BJ (cell line): ENCODE measurements at regions of chr17 and their contacts with region 1.

Region 1: GRCh38 chr17:55527540-55528118 is 16.4 kb upstream of the SMIM36 start:
- DNase-seq: no peak
- H3K4me3 ChIP-seq: no peak overlapping the region
- H3K27me3 ChIP-seq: peaks cover 1% of the 10 kb centered on the region; the same call in 1 of the 2 replicates
- CTCF ChIP-seq: peak; percentile 74

Region 2: DNA sequence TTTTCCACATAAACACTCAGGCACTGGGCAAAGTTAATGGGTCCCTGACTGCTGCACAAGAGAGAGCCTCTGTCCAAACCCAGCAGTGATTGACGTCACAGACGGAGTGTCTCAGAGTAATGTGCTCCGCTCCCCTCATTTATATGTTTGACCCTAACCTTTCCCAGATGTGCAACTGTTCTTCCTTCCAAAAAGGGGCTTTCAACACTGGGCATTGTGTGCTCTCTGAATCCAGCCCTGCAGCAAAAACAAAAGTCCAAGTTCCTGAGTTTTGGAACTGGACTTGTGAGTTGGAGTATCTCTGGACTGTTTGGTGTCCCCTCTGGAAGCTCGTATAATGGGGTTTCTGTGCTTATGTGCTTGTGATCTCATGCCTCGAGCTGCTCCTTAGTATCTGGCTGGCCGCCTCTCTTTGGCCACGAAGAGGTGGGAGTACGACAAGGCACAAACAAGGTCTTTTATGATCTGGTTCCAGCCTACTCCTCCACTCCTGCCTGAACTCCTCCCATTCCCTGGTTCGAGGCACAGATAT is 60.0 kb after region 1 on chr17:
- CTCF ChIA-PET with region 1: interaction called, 21 read pairs
- POLR2A ChIA-PET with region 1: no interaction called
- DNase-seq: no peak
- H3K4me3 ChIP-seq: no peak overlapping the region
- H3K27me3 ChIP-seq: no peaks in the 10 kb centered on the region
- CTCF ChIP-seq: no peak

Region 3: GRCh38 chr17:55641676-55642081 is 114.0 kb after region 1 on chr17:
- CTCF ChIA-PET with region 1: interaction called, 59 read pairs
- POLR2A ChIA-PET with region 1: no interaction called
- DNase-seq: no peak
- H3K4me3 ChIP-seq: no peak overlapping the region
- H3K27me3 ChIP-seq: no peaks in the 10 kb centered on the region
- CTCF ChIP-seq: peak; percentile 81

Region 4: GRCh38 chr17:55717898-55718735 is 190.5 kb after region 1 on chr17:
- CTCF ChIA-PET with region 1: interaction called, 60 read pairs
- POLR2A ChIA-PET with region 1: no interaction called
- DNase-seq: no peak
- H3K4me3 ChIP-seq: no peak overlapping the region
- H3K27me3 ChIP-seq: 0 out of 2 replicates have a peak, but pooled peaks cover 1% of the 10 kb centered on the region
- CTCF ChIP-seq: peak; percentile 78

Region 5: GRCh38 chr17:55770148-55770870 is 242.7 kb after region 1 on chr17:
- CTCF ChIA-PET with region 1: interaction called, 68 read pairs
- POLR2A ChIA-PET with region 1: no interaction called
- DNase-seq: no peak
- H3K4me3 ChIP-seq: no peak overlapping the region
- H3K27me3 ChIP-seq: no peaks in the 10 kb centered on the region
- CTCF ChIP-seq: peak; percentile 46